ENCODE measurements at regions of chr20 and their contacts with region 1.

Region 1: GRCh38 chr20:45957081-45957941 is 14.7 kb downstream of the ZNF335 start:
- DNase-seq: peak in 1 of 2 experiments; percentile 43
- H3K4me3 ChIP-seq: no peak overlapping the region
- H3K4me3 Mint-ChIP-seq: no peak overlapping the region
- H3K27ac Mint-ChIP-seq: no peak overlapping the region
- H3K4me1 ChIP-seq: no peaks in the 10 kb centered on the region
- H3K4me1 Mint-ChIP-seq: no peaks in the 10 kb centered on the region
- H3K27me3 ChIP-seq: no peaks in the 10 kb centered on the region
- H3K27me3 Mint-ChIP-seq: no peaks in the 10 kb centered on the region
- CTCF ChIP-seq: no peak

Region 2: DNA sequence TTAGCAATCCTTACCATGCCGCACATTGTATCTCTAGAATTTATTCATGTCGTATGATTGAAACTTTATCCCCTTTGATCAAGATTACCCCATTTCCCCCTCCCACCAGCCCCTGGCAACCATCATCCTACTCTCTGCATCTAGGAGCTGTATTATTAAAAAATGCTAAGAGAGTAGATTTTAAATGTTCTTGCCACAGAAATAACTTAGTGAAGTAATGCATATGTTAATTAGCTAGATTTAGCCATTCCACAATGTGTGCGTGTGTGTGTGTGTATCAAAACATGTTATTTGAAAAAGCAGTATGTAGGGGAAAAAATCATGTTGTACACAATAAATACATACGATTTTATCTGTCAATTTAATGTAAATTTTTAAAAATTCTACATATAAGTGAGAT is 430.0 kb before region 1 on chr20:
- CTCF ChIA-PET with region 1: interaction called, 14 read pairs
- POLR2A ChIA-PET with region 1: no interaction called
- intact Hi-C with region 1: no loop called
- DNase-seq: no peak
- H3K4me3 ChIP-seq: no peak overlapping the region
- H3K4me3 Mint-ChIP-seq: no peak overlapping the region
- H3K27ac Mint-ChIP-seq: no peak overlapping the region
- H3K4me1 ChIP-seq: no peaks in the 10 kb centered on the region
- H3K4me1 Mint-ChIP-seq: no peaks in the 10 kb centered on the region
- H3K27me3 ChIP-seq: peaks cover 4% of the 10 kb centered on the region
- H3K27me3 Mint-ChIP-seq: peaks cover 41% of the 10 kb centered on the region
- CTCF ChIP-seq: no peak

Region 3: GRCh38 chr20:46022411-46023147 is 65.3 kb after region 1 on chr20:
- CTCF ChIA-PET with region 1: no interaction called
- POLR2A ChIA-PET with region 1: no interaction called
- intact Hi-C with region 1: no loop called
- DNase-seq: peak; percentile 69 to 80
- H3K4me3 ChIP-seq: peak overlapping the region; percentile 43
- H3K4me3 Mint-ChIP-seq: peak overlapping the region; percentile 56
- H3K27ac Mint-ChIP-seq: no peak overlapping the region
- H3K4me1 ChIP-seq: no peaks in the 10 kb centered on the region
- H3K4me1 Mint-ChIP-seq: no peaks in the 10 kb centered on the region
- H3K27me3 ChIP-seq: peaks cover under 1% of the 10 kb centered on the region; the same call in 1 of the 2 replicates
- H3K27me3 Mint-ChIP-seq: peaks cover 28% of the 10 kb centered on the region
- CTCF ChIP-seq: peak; percentile 87 to 97